B cell (primary cell): ENCODE measurements at regions of chr10 and their contacts with region 1.

Region 1: DNA sequence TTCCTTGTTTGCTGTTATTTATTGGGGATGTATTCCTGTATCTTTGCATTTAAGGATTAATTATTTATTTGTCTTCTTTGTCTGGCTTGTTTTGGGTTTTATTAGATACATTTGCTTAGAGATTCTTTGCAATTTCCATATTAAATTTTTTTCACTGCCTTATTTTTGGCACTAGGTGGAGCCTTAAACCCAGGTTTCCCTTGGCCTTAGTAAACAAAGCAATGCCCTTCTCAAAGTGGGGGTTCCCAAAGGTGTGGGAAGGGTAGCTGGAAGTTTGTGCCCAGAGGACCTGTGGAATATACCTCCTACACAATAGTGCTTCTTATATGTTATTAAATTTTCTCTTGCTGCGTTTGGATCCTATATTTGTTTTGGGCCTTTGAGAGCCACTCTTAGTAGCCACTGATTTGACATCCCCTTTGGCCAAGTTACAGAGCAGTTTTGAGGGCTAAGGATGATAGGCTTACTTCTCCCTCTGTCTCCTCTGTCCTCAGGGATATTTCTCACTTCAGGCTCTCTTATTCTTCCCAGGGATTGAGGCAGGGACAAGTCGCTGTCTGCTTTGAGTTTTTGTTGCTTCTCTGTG is 162.3 kb downstream of the ITGB1 start:
- DNase-seq: peak; percentile 57
- ATAC-seq: no peak
- H3K4me3 ChIP-seq: no peak overlapping the region
- H3K4me3 Mint-ChIP-seq: no peak overlapping the region
- H3K27ac ChIP-seq: no peak overlapping the region
- H3K27ac Mint-ChIP-seq: no peak overlapping the region
- H3K4me1 ChIP-seq: no peaks in the 10 kb centered on the region
- H3K4me1 Mint-ChIP-seq: no peaks in the 10 kb centered on the region
- H3K27me3 ChIP-seq: no peaks in the 10 kb centered on the region
- H3K27me3 Mint-ChIP-seq: no peaks in the 10 kb centered on the region
- CTCF ChIP-seq: peak; percentile 78

Region 2: GRCh38 chr10:32731527-32731926 is 64.2 kb before region 1 on chr10:
- CTCF ChIA-PET with region 1: no interaction called
- POLR2A ChIA-PET with region 1: no interaction called
- intact Hi-C with region 1: no loop called
- DNase-seq: no peak
- ATAC-seq: no peak
- H3K4me3 ChIP-seq: no peak overlapping the region
- H3K4me3 Mint-ChIP-seq: no peak overlapping the region
- H3K27ac ChIP-seq: no peak overlapping the region
- H3K27ac Mint-ChIP-seq: no peak overlapping the region
- H3K4me1 ChIP-seq: no peaks in the 10 kb centered on the region
- H3K4me1 Mint-ChIP-seq: no peaks in the 10 kb centered on the region
- H3K27me3 ChIP-seq: no peaks in the 10 kb centered on the region
- H3K27me3 Mint-ChIP-seq: no peaks in the 10 kb centered on the region
- CTCF ChIP-seq: no peak

Region 3: GRCh38 chr10:32746869-32747268 is 48.8 kb before region 1 on chr10:
- CTCF ChIA-PET with region 1: no interaction called
- POLR2A ChIA-PET with region 1: no interaction called
- intact Hi-C with region 1: no loop called
- DNase-seq: no peak
- ATAC-seq: no peak
- H3K4me3 ChIP-seq: no peak overlapping the region
- H3K4me3 Mint-ChIP-seq: no peak overlapping the region
- H3K27ac ChIP-seq: no peak overlapping the region
- H3K27ac Mint-ChIP-seq: no peak overlapping the region
- H3K4me1 ChIP-seq: no peaks in the 10 kb centered on the region
- H3K4me1 Mint-ChIP-seq: no peaks in the 10 kb centered on the region
- H3K27me3 ChIP-seq: no peaks in the 10 kb centered on the region
- H3K27me3 Mint-ChIP-seq: no peaks in the 10 kb centered on the region
- CTCF ChIP-seq: no peak

Region 4: GRCh38 chr10:34637418-34637911 is 1841.8 kb after region 1 on chr10:
- CTCF ChIA-PET with region 1: no interaction called
- POLR2A ChIA-PET with region 1: no interaction called
- intact Hi-C with region 1: loop called (anchors 2 kb)
- DNase-seq: peak; percentile 68
- ATAC-seq: peak; percentile 87
- H3K4me3 ChIP-seq: no peak overlapping the region
- H3K4me3 Mint-ChIP-seq: peak overlapping the region; percentile 24
- H3K27ac ChIP-seq: no peak overlapping the region
- H3K27ac Mint-ChIP-seq: no peak overlapping the region
- H3K4me1 ChIP-seq: peaks cover 5 to 7% of the 10 kb centered on the region in 2 donors
- H3K4me1 Mint-ChIP-seq: peaks cover 18% of the 10 kb centered on the region
- H3K27me3 ChIP-seq: no peaks in the 10 kb centered on the region
- H3K27me3 Mint-ChIP-seq: no peaks in the 10 kb centered on the region
- CTCF ChIP-seq: peak; percentile 84